ENCODE measurements at regions of chr7 and their contacts with region 1.

Region 1: GRCh38 chr7:98106647-98107445 is at the start of gene LMTK2:
- DNase-seq: peak; percentile 93 to 96 (median 94)
- H3K4me3 ChIP-seq: peak within 1 kb of the TSS; percentile 74 to 87 (median 85)
- H3K4me3 Mint-ChIP-seq: peak within 1 kb of the TSS; percentile 93 to 95
- H3K27ac ChIP-seq: peak within 1 kb of the TSS in 1 of 2 donors; percentile 79
- H3K27ac Mint-ChIP-seq: peak within 1 kb of the TSS; percentile 83 to 95 (median 91)
- H3K4me1 ChIP-seq: peaks cover 12 to 18% of the 10 kb centered on the region in 2 donors
- H3K4me1 Mint-ChIP-seq: peaks cover 18% of the 10 kb centered on the region
- H3K27me3 ChIP-seq: peaks cover 36 to 56% of the 10 kb centered on the region in 2 donors
- H3K27me3 Mint-ChIP-seq: peaks cover 53 to 72% (median 56%) of the 10 kb centered on the region in 3 donors
- CTCF ChIP-seq: peak; percentile 89
- polyA plus RNA-seq, gene LMTK2: 1.7 to 9.2 (median 1.8) TPM

Region 2: DNA sequence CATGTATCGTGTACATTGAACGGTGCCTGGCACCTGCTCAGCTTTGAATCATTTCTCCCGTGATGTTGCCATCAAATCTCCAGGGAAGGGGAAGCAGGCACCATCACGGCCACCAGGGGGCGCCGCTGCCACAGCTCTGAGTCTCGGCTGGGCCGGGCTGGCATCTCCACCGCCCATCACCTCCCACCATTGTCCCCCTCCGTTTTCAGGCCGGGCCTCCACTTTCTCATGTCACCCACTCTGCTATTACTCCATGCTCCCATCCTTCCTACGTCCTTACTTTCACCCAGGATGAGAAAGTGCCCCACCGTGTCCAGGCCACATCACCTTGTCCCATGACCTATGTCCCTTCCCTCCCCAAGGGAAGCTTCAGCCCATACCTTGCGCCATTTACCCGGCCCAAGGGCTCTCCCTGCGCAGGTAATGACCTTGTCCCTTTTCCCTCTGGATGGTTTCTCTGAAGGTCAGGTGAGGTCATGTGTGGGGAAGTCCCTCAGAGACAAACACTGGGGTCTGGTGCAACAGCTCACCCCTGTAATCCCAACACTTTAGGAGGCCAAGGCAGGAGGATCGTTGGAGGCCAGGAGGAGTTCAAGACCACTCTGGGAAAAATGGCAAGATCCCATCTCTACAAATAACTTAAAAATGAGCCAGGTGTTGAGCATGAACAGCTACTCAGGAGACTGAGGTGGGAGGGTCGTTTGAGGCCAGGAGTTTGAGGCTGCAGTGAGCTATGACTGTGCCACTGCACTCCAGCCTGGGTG is 85.1 kb before region 1 on chr7:
- intact Hi-C with region 1: loop called (anchors 5 kb)
- DNase-seq: peak; percentile 52 to 70 (median 64)
- H3K4me3 ChIP-seq: no peak overlapping the region
- H3K4me3 Mint-ChIP-seq: no peak overlapping the region
- H3K27ac ChIP-seq: no peak overlapping the region
- H3K27ac Mint-ChIP-seq: no peak overlapping the region
- H3K4me1 ChIP-seq: peaks cover 0 to 5% of the 10 kb centered on the region in 2 donors
- H3K4me1 Mint-ChIP-seq: peaks cover 11% of the 10 kb centered on the region
- H3K27me3 ChIP-seq: no peaks in the 10 kb centered on the region
- H3K27me3 Mint-ChIP-seq: peaks cover 10 to 24% (median 10%) of the 10 kb centered on the region in 3 donors
- CTCF ChIP-seq: peak; percentile 94

Region 3: GRCh38 chr7:98133181-98133580 is 26.3 kb after region 1 on chr7:
- intact Hi-C with region 1: loop called in 1 of 2 experiments (anchors 5 kb)
- DNase-seq: peak; percentile 84 to 91 (median 90)
- H3K4me3 ChIP-seq: peak overlapping the region; percentile 13 to 71 (median 23)
- H3K4me3 Mint-ChIP-seq: peak overlapping the region; percentile 39 to 90
- H3K27ac ChIP-seq: peak overlapping the region in 1 of 2 donors; percentile 90
- H3K27ac Mint-ChIP-seq: peak overlapping the region; percentile 96 to 100 (median 99)
- H3K4me1 ChIP-seq: peaks cover 78 to 81% of the 10 kb centered on the region in 2 donors
- H3K4me1 Mint-ChIP-seq: peaks cover 81% of the 10 kb centered on the region
- H3K27me3 ChIP-seq: peaks cover 33 to 42% of the 10 kb centered on the region in 2 donors
- H3K27me3 Mint-ChIP-seq: peaks cover 27 to 48% (median 46%) of the 10 kb centered on the region in 3 donors
- CTCF ChIP-seq: no peak

Region 4: GRCh38 chr7:98149116-98149692 is 42.4 kb after region 1 on chr7:
- intact Hi-C with region 1: loop called in 1 of 2 experiments (anchors 5 kb)
- DNase-seq: no peak
- H3K4me3 ChIP-seq: no peak overlapping the region
- H3K4me3 Mint-ChIP-seq: peak overlapping the region in 1 of 2 donors; percentile 68
- H3K27ac ChIP-seq: no peak overlapping the region
- H3K27ac Mint-ChIP-seq: no peak overlapping the region
- H3K4me1 ChIP-seq: no peaks in the 10 kb centered on the region
- H3K4me1 Mint-ChIP-seq: no peaks in the 10 kb centered on the region
- H3K27me3 ChIP-seq: peaks cover 59 to 86% of the 10 kb centered on the region in 2 donors
- H3K27me3 Mint-ChIP-seq: peaks cover 67 to 81% (median 77%) of the 10 kb centered on the region in 3 donors
- CTCF ChIP-seq: no peak

Region 5: DNA sequence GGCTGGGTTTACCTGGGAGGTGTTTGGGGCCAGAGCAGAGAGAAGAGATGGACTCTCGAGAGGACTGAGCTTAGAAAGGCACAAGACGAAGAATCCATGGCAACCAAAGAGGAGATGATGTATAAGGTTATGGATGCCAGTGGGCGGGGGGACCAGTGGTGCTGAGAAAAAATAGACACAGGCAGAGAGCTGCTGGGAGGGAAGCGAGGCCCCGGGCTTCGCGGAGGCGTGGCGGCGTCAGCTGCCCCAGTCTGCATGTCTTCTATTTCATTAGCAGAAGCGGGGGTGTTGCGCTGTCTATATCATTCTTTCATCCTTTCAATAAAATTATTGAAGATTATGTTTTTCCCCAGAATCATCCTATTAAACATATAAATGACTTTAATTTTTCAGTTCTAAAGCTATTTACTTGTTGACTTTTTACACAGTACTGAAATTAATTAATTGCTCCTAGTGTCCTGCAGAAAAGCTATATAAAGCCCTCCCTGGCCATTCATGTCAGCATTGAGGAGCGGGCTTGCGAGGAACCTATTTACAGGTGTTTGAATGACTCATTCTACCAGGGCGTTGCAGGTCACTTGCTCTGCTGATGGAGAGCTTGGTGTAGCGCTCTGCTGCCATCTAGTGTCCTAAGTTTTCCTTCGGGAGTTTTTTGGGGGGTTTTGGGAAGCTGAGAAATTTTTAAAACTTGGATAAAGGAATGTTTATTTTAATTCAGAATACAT is 61.5 kb after region 1 on chr7:
- intact Hi-C with region 1: loop called (anchors 2 to 5 kb)
- DNase-seq: peak; percentile 43 to 71 (median 44)
- H3K4me3 ChIP-seq: no peak overlapping the region
- H3K4me3 Mint-ChIP-seq: peak overlapping the region in 1 of 2 donors; percentile 72
- H3K27ac ChIP-seq: no peak overlapping the region
- H3K27ac Mint-ChIP-seq: no peak overlapping the region
- H3K4me1 ChIP-seq: peaks cover 3 to 4% of the 10 kb centered on the region in 2 donors
- H3K4me1 Mint-ChIP-seq: peaks cover 19% of the 10 kb centered on the region
- H3K27me3 ChIP-seq: peaks cover 5 to 28% of the 10 kb centered on the region in 2 donors
- H3K27me3 Mint-ChIP-seq: peaks cover 23 to 38% (median 25%) of the 10 kb centered on the region in 3 donors
- CTCF ChIP-seq: peak; percentile 83